ENCODE measurements at regions of chr6 and their contacts with region 1.

Region 1: GRCh38 chr6:127737009-127737486 is 160.1 kb downstream of the C6orf58 start:
- DNase-seq: peak in 3 of 10 donors; percentile 22 to 39 (median 27)
- H3K4me3 ChIP-seq: no peak overlapping the region
- H3K27ac ChIP-seq: peak overlapping the region in 1 of 59 donors; percentile 34
- H3K27me3 ChIP-seq: no peaks in the 10 kb centered on the region
- CTCF ChIP-seq: peak; percentile 52 to 91 (median 77)

Region 2: DNA sequence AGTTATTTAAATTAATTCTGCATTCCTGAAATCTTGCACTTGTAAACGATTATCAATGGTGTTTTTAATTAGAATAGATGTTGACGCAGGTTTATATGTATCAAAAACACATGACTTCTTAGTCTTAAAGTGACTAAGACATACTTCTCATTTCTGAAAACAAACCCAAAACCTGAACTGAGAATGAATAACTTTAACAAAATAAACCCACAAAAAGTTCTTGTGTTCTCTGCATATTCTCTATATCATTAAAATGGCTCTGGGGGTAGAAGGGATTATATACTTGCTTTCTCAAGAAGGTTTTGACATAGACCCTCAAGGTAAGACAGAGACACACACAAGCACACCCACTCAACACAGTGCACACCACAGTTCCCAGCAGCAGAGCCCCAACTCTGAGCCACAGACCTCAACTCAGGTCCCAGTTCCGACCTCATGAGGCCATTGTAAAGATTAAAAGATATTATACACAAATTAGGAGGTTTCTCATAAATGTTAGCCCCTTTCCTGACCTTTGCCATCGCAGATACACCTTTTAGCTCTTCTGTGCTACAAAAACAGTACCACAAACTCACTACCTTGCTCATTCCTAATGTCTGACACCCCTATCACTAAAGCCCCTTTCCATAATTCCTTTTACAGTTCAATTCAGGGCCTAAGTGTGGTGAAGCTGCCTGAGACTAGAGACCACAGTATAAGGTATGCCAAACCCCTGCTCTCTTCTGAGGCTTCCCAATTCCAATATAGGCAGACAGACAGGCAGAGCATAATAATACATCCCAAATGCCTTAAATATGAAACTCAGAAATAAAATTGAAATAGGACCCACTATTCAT is 515.5 kb after region 1 on chr6:
- intact Hi-C with region 1: no loop called
- DNase-seq: no peak
- H3K4me3 ChIP-seq: no peak overlapping the region
- H3K27ac ChIP-seq: no peak overlapping the region
- H3K27me3 ChIP-seq: no peaks in the 10 kb centered on the region
- CTCF ChIP-seq: no peak

Region 3: DNA sequence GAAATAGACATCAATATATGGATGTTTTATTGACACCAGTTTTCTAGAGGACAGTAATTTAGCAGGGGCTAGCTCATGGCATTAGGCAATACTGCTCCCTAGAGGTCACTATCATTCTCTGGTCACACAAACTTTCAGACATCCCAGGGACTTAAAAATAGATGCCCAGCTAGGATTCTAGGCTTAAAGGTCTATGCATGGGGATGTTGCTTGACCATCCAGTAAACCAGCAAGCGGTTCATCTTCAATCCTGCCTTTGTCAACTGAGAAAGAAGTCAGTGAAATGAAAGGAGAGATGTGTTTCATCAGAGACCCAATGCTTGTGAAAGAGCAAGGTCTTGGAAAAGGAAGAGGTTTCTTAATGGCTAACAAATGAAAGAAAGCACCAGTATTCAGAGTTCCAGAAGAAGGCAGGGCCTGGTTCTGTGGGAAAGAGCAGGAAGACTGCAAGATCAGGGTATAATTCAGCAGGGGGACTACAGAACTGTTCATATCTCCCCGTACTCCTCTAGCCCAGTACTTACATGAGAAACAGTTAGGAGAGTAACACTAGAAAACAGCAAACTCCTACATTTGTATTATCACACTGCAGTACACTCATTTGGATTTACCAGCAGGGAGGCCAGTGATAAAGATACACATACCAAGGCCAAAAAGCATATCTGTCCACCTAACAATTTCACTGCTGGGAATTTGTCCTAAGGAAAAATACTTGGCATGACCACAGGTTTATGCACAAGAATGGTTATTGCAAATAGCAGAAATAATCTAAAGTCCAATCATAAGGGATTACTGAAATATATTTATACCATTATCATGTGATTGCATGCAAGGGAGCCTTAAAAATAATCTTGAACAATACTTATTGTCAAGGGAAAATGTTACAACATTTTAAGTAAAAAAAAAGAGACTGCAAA is 994.5 kb after region 1 on chr6:
- intact Hi-C with region 1: loop called (anchors 5 kb)
- DNase-seq: no peak
- H3K4me3 ChIP-seq: no peak overlapping the region
- H3K27ac ChIP-seq: peak overlapping the region in 26 of 59 donors; percentile 6 to 66 (median 36)
- H3K27me3 ChIP-seq: no peaks in the 10 kb centered on the region
- CTCF ChIP-seq: peak in 55 of 56 donors; percentile 34 to 85 (median 65)

Measured in dorsolateral prefrontal cortex (tissue), 120 donors.